ENCODE measurements at regions of chr15 and their contacts with region 1.

Region 1: DNA sequence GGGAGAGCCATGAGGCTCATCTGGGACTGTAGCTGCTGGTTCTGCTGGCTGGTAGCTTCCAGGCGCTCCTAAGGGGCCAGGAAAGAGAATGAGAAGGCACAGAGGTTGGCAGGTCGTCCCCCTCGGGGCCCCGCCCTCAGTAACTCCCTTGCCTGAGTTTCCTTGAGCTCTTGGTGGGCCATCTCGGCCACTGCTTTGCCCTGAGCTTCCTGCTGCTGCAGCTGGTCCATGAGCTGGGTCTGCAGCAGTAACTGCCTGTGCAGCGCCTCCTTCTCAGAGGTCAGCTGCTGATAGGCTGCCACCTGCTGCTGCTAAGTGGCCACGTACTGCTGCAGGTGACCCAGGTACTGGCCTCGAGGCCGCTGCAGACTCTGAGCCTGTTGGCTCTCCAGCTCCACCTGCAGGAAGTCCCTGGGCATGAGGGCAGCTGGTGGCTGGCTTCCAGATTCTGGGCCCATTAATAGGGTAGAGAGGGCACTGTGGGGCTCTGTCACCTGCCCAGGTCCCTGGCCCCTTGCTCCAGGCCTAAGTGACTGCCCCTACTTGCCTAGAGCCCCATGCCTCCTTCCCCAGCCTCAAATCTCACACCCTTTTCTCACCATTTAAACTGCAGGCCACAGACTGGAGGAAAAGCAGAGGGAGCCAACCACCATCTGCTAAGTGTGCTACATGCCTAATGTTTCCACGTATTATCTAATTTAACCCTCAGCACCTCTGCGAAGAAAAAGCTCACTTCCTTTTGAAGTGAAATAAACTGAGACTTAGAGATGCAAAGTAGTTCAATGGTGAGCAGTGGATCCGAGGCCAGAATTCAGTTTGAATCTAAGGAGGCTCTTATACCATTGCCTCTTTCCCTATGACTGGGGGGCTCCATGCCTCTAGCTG is 10.8 kb upstream of the VPS33B start:
- DNase-seq: peak; percentile 91 to 92
- H3K4me3 ChIP-seq: no peak overlapping the region
- H3K4me3 Mint-ChIP-seq: no peak overlapping the region
- H3K27ac Mint-ChIP-seq: no peak overlapping the region
- H3K4me1 ChIP-seq: no peaks in the 10 kb centered on the region
- H3K4me1 Mint-ChIP-seq: peaks cover 7% of the 10 kb centered on the region
- H3K27me3 ChIP-seq: no peaks in the 10 kb centered on the region
- H3K27me3 Mint-ChIP-seq: peaks cover 17% of the 10 kb centered on the region
- CTCF ChIP-seq: peak; percentile 83 to 84

Region 2: GRCh38 chr15:90970274-90970673 is 62.9 kb before region 1 on chr15:
- CTCF ChIA-PET with region 1: no interaction called
- POLR2A ChIA-PET with region 1: interaction called, 3 read pairs
- intact Hi-C with region 1: loop called (anchors 5 kb)
- DNase-seq: no peak
- H3K4me3 ChIP-seq: no peak overlapping the region
- H3K4me3 Mint-ChIP-seq: no peak overlapping the region
- H3K27ac Mint-ChIP-seq: no peak overlapping the region
- H3K4me1 ChIP-seq: no peaks in the 10 kb centered on the region
- H3K4me1 Mint-ChIP-seq: no peaks in the 10 kb centered on the region
- H3K27me3 ChIP-seq: no peaks in the 10 kb centered on the region
- H3K27me3 Mint-ChIP-seq: no peaks in the 10 kb centered on the region
- CTCF ChIP-seq: no peak

Region 3: DNA sequence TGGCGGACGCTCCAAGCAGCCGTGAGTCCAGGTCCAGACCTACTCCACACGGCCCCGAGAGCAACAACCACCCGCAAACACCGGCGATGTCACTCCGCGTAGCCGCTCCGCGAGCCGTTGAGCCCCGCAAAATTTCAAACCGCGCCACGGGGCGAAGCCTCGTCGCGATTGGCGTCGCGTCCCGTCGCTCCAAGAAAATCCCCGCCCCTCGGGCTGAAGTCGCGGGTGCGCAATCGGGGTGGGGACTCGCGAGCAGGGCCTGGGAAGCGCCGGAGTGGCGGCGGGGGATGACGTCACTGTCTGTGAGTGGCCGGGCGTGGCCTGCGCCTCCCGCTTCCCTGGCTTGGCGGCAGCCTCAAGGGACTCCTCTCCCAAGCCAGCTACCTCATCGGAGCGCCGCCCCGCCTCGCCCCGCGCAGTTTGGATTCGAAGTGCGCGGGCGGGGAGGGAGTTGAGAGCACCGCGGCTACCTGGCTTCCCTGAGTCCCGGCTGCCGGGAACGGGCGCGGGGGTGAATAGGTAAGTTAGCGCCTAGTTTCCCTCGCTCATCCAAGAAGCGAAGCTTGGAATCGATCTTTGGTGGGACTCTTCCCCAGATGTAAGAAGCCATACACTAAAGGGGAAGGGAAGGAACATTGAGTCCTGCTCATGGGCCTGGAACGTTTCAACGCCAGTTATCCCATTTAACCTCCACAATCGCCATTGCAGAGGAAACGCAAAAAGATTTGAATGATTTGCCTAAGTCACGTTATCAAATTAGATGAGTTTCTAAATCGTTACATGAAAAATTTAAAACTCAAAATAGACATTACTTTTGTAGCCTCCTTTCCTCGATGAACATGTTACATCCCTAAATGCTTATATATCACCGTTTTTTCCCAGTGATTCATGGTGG is 38.5 kb before region 1 on chr15 and contains the start of gene PRC1:
- CTCF ChIA-PET with region 1: interaction called, 9 read pairs
- POLR2A ChIA-PET with region 1: interaction called, 4 read pairs
- intact Hi-C with region 1: loop called (anchors 2 kb)
- DNase-seq: peak; percentile 98 to 99
- H3K4me3 ChIP-seq: peak within 1 kb of the TSS; percentile 83
- H3K4me3 Mint-ChIP-seq: peak within 1 kb of the TSS; percentile 87
- H3K27ac Mint-ChIP-seq: peak within 1 kb of the TSS; percentile 96
- H3K4me1 ChIP-seq: peaks cover 13% of the 10 kb centered on the region
- H3K4me1 Mint-ChIP-seq: peaks cover 11% of the 10 kb centered on the region
- H3K27me3 ChIP-seq: no peaks in the 10 kb centered on the region
- H3K27me3 Mint-ChIP-seq: no peaks in the 10 kb centered on the region
- CTCF ChIP-seq: no peak
- total RNA-seq, gene PRC1: 142 and 145 TPM in 2 replicates

Region 4: GRCh38 chr15:91022075-91022835 is 10.9 kb before region 1 on chr15 and contains the start of gene VPS33B:
- CTCF ChIA-PET with region 1: interaction called, 33 read pairs
- POLR2A ChIA-PET with region 1: interaction called, 3 read pairs
- intact Hi-C with region 1: loop called (anchors 1 kb)
- DNase-seq: peak; percentile 82 to 89
- H3K4me3 ChIP-seq: peak within 1 kb of the TSS; percentile 78
- H3K4me3 Mint-ChIP-seq: peak within 1 kb of the TSS; percentile 81
- H3K27ac Mint-ChIP-seq: peak within 1 kb of the TSS; percentile 81
- H3K4me1 ChIP-seq: peaks cover 12% of the 10 kb centered on the region; the same call in 1 of the 2 replicates
- H3K4me1 Mint-ChIP-seq: peaks cover 10% of the 10 kb centered on the region
- H3K27me3 ChIP-seq: no peaks in the 10 kb centered on the region
- H3K27me3 Mint-ChIP-seq: no peaks in the 10 kb centered on the region
- CTCF ChIP-seq: no peak
- total RNA-seq, gene VPS33B: 13.3 and 13.7 TPM in 2 replicates

Region 5: DNA sequence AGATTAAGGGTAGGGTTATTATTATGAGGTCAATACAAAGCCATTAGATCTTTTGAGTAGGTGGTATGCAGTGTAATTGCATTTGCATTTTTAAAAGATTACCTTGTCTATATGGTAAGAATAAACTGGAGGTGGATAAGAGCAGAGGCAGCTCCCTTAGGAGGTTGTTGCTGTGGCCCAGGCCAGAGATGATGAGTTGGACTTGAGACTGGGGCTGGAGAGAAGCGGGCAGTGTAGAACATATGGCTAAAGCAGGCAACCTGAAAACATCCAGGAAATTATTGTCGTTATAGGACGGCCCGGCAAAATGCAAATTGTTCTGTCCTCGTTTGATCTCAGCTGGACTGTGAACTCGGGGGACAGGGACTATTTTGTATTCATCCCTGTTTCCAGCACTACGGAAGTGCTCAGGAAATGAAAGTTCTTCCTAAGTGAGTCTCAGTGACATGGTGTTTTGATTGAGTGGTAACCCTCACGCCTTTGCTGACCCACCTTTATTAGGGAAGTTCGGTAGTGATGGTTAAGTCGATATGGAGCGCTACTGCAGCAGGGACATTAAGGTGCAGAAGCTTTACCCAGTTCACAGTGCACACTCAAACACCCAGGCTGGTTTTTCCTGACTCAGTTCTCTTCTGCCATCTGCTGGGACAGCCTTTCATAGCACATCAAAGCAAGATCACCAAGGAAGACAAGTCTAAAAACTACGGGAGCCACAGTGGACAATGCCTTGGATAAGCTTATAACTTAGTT is 16.4 kb after region 1 on chr15:
- CTCF ChIA-PET with region 1: interaction called, 11 read pairs
- POLR2A ChIA-PET with region 1: no interaction called
- intact Hi-C with region 1: no loop called
- DNase-seq: peak in 1 of 2 experiments; percentile 32
- H3K4me3 ChIP-seq: no peak overlapping the region
- H3K4me3 Mint-ChIP-seq: no peak overlapping the region
- H3K27ac Mint-ChIP-seq: no peak overlapping the region
- H3K4me1 ChIP-seq: no peaks in the 10 kb centered on the region
- H3K4me1 Mint-ChIP-seq: no peaks in the 10 kb centered on the region
- H3K27me3 ChIP-seq: no peaks in the 10 kb centered on the region
- H3K27me3 Mint-ChIP-seq: peaks cover 21% of the 10 kb centered on the region
- CTCF ChIP-seq: peak in 1 of 2 experiments; percentile 41